OCI-LY7 (cell line): ENCODE measurements at regions of chr6 and their contacts with region 1.

Region 1: GRCh38 chr6:129748212-129748900 is 38.4 kb upstream of the ARHGAP18 start:
- DNase-seq: peak; percentile 88
- H3K4me3 ChIP-seq: peak overlapping the region; percentile 46
- H3K27ac ChIP-seq: peak overlapping the region; percentile 56
- H3K4me1 ChIP-seq: peaks cover 54% of the 10 kb centered on the region
- CTCF ChIP-seq: no peak

Region 2: GRCh38 chr6:129359811-129360681 is 388.3 kb before region 1 on chr6:
- CTCF ChIA-PET with region 1: no interaction called
- POLR2A ChIA-PET with region 1: no interaction called
- intact Hi-C with region 1: loop called (anchors 5 kb)
- DNase-seq: no peak
- H3K4me3 ChIP-seq: no peak overlapping the region
- H3K27ac ChIP-seq: no peak overlapping the region
- H3K4me1 ChIP-seq: peaks cover 4% of the 10 kb centered on the region
- CTCF ChIP-seq: no peak

Region 3: DNA sequence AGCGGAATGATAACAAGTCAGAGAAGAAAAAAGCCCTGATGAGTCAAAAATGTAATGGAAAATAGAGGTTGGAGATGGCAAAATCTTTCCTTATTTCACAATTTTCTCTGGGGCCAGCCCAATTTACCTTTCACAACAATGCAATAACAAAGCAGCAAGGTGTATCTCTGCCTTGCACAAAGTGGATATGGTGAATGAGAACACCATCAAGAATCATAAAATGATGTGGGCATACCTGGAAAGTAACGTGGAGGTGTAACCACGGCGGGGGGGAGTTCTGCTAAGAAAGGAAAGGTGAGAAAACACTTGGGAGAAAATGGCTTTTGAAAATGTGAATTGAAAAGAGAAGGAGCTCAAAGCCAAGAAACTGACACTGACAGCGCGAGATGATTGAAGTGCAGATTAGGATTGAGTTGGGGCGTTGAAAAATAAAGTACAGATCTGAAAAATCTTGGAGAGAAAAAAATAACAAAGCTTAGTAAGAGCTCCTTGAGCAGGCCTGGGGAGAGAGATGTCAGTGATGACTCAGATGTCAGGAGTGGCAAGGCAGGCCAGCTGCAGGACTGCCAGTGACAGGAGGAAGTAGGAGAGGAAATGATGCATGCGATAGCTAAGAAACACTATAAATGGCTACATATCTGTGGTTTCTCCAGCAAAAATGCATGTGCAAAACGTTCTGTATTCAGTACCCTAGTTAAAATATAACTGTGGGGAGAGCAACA is 64.6 kb before region 1 on chr6:
- CTCF ChIA-PET with region 1: no interaction called
- POLR2A ChIA-PET with region 1: interaction called, 5 read pairs
- intact Hi-C with region 1: loop called (anchors 2 kb)
- DNase-seq: peak; percentile 82
- H3K4me3 ChIP-seq: peak overlapping the region; percentile 42
- H3K27ac ChIP-seq: peak overlapping the region; percentile 47
- H3K4me1 ChIP-seq: peaks cover 56% of the 10 kb centered on the region
- CTCF ChIP-seq: no peak